ENCODE measurements at regions of chr22 and their contacts with region 1.

Region 1: GRCh38 chr22:43945632-43946383 is 9.4 kb upstream of the SAMM50 start:
- DNase-seq: peak; percentile 69 to 72
- ATAC-seq: peak; percentile 99 to 100
- H3K4me3 ChIP-seq: no peak overlapping the region
- H3K27ac ChIP-seq: no peak overlapping the region
- H3K4me1 ChIP-seq: no peaks in the 10 kb centered on the region
- CTCF ChIP-seq: peak; percentile 59
- EP300 ChIP-seq: no peak
- POLR2A ChIP-seq: no peak
- RAD21 ChIP-seq: peak; percentile 34 to 38; a peak in 4 of 5 replicates

Region 2: DNA sequence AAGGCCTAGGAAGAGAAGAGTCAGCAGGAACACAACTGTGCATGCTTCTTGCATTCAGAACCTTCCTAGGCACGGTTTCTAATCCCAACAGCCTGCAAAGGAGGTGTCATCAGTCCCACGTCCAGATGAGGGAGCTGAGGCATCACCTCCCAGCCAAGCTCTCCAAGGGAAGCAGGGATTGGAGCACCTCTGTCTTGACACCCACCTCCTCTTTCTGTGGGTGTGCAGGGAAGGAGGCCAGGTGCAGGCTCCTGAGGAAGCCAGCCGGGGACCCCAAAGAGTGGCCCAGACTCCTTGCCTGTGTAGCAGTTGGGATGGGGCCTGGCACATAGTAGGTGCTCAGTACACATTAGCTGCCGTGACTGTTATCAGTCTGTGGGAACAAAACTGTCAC is 56.0 kb before region 1 on chr22:
- CTCF ChIA-PET with region 1: interaction called, 14 read pairs
- POLR2A ChIA-PET with region 1: no interaction called
- DNase-seq: peak in 1 of 2 experiments; percentile 44
- ATAC-seq: peak; percentile 49 to 68; a peak in 4 of 6 replicates
- H3K4me3 ChIP-seq: no peak overlapping the region
- H3K27ac ChIP-seq: no peak overlapping the region
- H3K4me1 ChIP-seq: peaks cover 3% of the 10 kb centered on the region; the same call in 2 of the 3 replicates
- CTCF ChIP-seq: no peak
- EP300 ChIP-seq: no peak
- POLR2A ChIP-seq: no peak
- RAD21 ChIP-seq: peak; percentile 25 to 51; a peak in 3 of 5 replicates

Region 3: DNA sequence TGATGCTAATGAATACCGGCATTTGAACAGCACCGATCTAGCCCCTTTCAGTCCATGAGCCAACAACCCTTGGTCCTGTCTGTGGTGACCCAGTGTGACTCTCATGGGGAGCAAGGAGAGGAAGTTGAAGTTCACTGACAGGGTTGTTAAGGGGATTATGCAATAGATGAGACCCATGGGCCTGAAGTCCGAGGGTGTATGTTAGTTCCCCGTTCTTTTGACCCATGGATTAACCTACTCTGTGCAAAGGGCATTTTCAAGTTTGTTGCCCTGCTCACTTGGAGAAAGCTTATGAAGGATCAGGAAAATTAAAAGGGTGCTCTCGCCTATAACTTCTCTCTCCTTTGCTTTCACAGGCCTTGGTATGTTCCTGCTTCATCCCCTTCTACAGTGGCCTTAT is 17.3 kb before region 1 on chr22:
- CTCF ChIA-PET with region 1: interaction called, 19 read pairs
- POLR2A ChIA-PET with region 1: interaction called, 4 read pairs
- DNase-seq: no peak
- ATAC-seq: no peak
- H3K4me3 ChIP-seq: no peak overlapping the region
- H3K27ac ChIP-seq: no peak overlapping the region
- H3K4me1 ChIP-seq: no peaks in the 10 kb centered on the region
- CTCF ChIP-seq: no peak
- EP300 ChIP-seq: no peak
- POLR2A ChIP-seq: no peak
- RAD21 ChIP-seq: no peak

Region 4: GRCh38 chr22:43985532-43985931 is 39.7 kb after region 1 on chr22:
- CTCF ChIA-PET with region 1: no interaction called
- POLR2A ChIA-PET with region 1: no interaction called
- DNase-seq: no peak
- ATAC-seq: no peak
- H3K4me3 ChIP-seq: no peak overlapping the region
- H3K27ac ChIP-seq: no peak overlapping the region
- H3K4me1 ChIP-seq: no peaks in the 10 kb centered on the region
- CTCF ChIP-seq: no peak
- EP300 ChIP-seq: no peak
- POLR2A ChIP-seq: no peak
- RAD21 ChIP-seq: no peak